Activated CD4-positive, alpha-beta T cell treated with anti-CD3 and anti-CD28 coated beads for 36 hours (primary cell): ENCODE measurements at regions of chr15 and their contacts with region 1.

Region 1: GRCh38 chr15:38440353-38441129 is 13.4 kb upstream of the FAM98B start:
- DNase-seq: peak; percentile 67
- ATAC-seq: peak; percentile 90
- H3K4me3 Mint-ChIP-seq: no peak overlapping the region
- H3K27ac Mint-ChIP-seq: peak overlapping the region; percentile 23
- H3K4me1 Mint-ChIP-seq: peaks cover 5% of the 10 kb centered on the region
- H3K27me3 Mint-ChIP-seq: peaks cover 14% of the 10 kb centered on the region

Region 2: GRCh38 chr15:38424101-38424552 is 16.4 kb before region 1 on chr15:
- CTCF ChIA-PET with region 1: interaction called, 33 read pairs
- POLR2A ChIA-PET with region 1: no interaction called
- intact Hi-C with region 1: no loop called
- DNase-seq: no peak
- ATAC-seq: no peak
- H3K4me3 Mint-ChIP-seq: no peak overlapping the region
- H3K27ac Mint-ChIP-seq: no peak overlapping the region
- H3K4me1 Mint-ChIP-seq: no peaks in the 10 kb centered on the region
- H3K27me3 Mint-ChIP-seq: peaks cover 19% of the 10 kb centered on the region

Region 3: GRCh38 chr15:38461066-38461833 is 20.7 kb after region 1 on chr15:
- CTCF ChIA-PET with region 1: interaction called, 28 read pairs
- POLR2A ChIA-PET with region 1: no interaction called
- intact Hi-C with region 1: no loop called
- DNase-seq: no peak
- ATAC-seq: peak; percentile 76
- H3K4me3 Mint-ChIP-seq: no peak overlapping the region
- H3K27ac Mint-ChIP-seq: no peak overlapping the region
- H3K4me1 Mint-ChIP-seq: peaks cover 47% of the 10 kb centered on the region
- H3K27me3 Mint-ChIP-seq: no peaks in the 10 kb centered on the region

Region 4: DNA sequence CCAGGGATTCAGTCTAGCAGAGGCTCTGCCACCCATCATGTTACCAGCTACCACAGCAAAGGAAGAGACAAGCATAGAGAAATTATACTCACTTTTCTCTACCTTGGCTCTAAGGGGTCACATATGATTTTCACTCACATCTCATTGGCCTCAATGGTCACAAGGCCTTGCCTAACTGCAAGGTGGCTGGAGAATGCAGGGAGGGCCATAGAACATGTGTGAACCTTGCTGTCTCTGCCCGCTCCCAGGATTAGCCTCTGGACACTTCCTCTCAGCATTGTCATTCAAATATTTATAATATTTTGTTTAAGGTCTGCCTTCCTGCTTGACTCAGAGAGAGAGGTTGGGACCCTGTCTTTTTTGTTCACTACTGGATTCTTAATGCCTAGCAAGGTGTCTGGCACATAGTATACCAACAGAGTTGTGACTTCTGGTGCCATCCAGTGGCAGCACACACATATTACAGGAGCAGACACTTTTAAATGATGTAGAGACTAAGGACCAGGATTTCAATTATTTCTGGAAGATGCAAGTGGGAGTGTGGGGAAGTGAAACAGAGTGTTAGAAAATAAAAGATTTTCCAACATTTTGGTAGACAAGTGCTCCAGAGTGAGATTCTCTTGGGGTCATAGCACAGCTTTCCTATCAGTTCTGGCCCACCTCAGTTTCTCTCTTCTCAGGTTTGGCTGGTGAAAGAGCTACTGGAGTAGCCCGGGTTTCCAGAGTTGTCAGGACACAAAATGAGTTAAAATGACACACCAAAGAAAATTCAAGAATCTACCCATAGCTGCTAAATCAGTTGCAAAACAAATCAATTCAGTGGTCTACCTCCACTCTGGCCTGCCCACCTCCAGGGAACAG is 243.1 kb after region 1 on chr15:
- CTCF ChIA-PET with region 1: interaction called, 115 read pairs
- POLR2A ChIA-PET with region 1: no interaction called
- intact Hi-C with region 1: no loop called
- DNase-seq: peak; percentile 86
- ATAC-seq: peak; percentile 73
- H3K4me3 Mint-ChIP-seq: no peak overlapping the region
- H3K27ac Mint-ChIP-seq: peak overlapping the region; percentile 80
- H3K4me1 Mint-ChIP-seq: peaks cover 79% of the 10 kb centered on the region
- H3K27me3 Mint-ChIP-seq: no peaks in the 10 kb centered on the region

Region 5: GRCh38 chr15:38722236-38722635 is 281.7 kb after region 1 on chr15:
- CTCF ChIA-PET with region 1: interaction called, 11 read pairs
- POLR2A ChIA-PET with region 1: no interaction called
- intact Hi-C with region 1: no loop called
- DNase-seq: no peak
- ATAC-seq: no peak
- H3K4me3 Mint-ChIP-seq: no peak overlapping the region
- H3K27ac Mint-ChIP-seq: no peak overlapping the region
- H3K4me1 Mint-ChIP-seq: no peaks in the 10 kb centered on the region
- H3K27me3 Mint-ChIP-seq: no peaks in the 10 kb centered on the region

Region 6: GRCh38 chr15:39580117-39580484 is 1139.6 kb after region 1 on chr15:
- CTCF ChIA-PET with region 1: no interaction called
- POLR2A ChIA-PET with region 1: interaction called, 3 read pairs
- intact Hi-C with region 1: loop called in 1 of 2 experiments (anchors 2 kb)
- DNase-seq: peak; percentile 93
- ATAC-seq: peak; percentile 90
- H3K4me3 Mint-ChIP-seq: peak overlapping the region; percentile 53
- H3K27ac Mint-ChIP-seq: no peak overlapping the region
- H3K4me1 Mint-ChIP-seq: peaks cover 13% of the 10 kb centered on the region
- H3K27me3 Mint-ChIP-seq: peaks cover 55% of the 10 kb centered on the region